ENCODE measurements at regions of chr6 and their contacts with region 1.

Region 1: GRCh38 chr6:8219352-8219943 is 117.1 kb upstream of the EEF1E1 start:
- DNase-seq: peak in 1 of 3 donors; percentile 81
- ATAC-seq: peak; percentile 65
- H3K4me3 ChIP-seq: no peak overlapping the region
- H3K4me1 ChIP-seq: no peaks in the 10 kb centered on the region
- CTCF ChIP-seq: no peak

Region 2: GRCh38 chr6:7881765-7882500 is 337.5 kb before region 1 on chr6:
- intact Hi-C with region 1: no loop called
- DNase-seq: no peak
- ATAC-seq: no peak
- H3K4me3 ChIP-seq: no peak overlapping the region
- H3K4me1 ChIP-seq: no peaks in the 10 kb centered on the region
- CTCF ChIP-seq: no peak

Region 3: DNA sequence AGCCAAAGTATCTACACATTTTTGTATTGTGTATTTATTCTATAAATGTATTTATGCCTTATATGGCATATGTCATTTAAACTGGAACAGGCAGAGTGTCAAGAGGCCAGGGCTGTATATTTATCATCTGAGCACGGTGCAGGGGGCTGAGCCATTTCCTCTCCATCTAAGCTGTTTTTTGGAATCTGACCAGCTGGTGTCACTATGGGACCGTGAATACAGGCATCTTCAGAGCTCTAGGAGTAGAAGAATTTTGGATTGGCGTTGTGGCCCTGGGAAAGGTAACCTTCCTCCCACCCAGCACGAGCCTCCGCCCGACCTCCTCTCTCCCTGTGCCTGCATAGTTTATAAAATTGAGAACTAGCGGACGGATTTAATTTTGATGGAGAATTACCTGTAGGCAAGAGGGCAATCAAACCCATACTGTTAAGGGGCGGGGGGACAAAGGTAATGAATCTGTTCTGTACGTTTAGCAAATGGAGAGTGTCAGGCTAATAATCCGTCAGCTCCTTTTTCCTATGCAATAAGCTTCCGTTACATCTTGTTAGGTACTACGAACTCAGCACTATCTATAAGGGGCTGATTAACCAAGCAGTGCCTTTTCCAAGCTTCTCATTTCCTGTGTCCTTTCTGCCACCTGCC is 88.1 kb before region 1 on chr6:
- intact Hi-C with region 1: loop called in 1 of 2 experiments (anchors 5 kb)
- DNase-seq: peak in 1 of 3 donors; percentile 79
- ATAC-seq: peak; percentile 73
- H3K4me3 ChIP-seq: no peak overlapping the region
- H3K4me1 ChIP-seq: no peaks in the 10 kb centered on the region
- CTCF ChIP-seq: no peak

Region 4: GRCh38 chr6:8269872-8270454 is 50.5 kb after region 1 on chr6:
- intact Hi-C with region 1: no loop called
- DNase-seq: no peak
- ATAC-seq: no peak
- H3K4me3 ChIP-seq: no peak overlapping the region
- H3K4me1 ChIP-seq: no peaks in the 10 kb centered on the region
- CTCF ChIP-seq: no peak

Measured in mucosa of descending colon (tissue), 3 donors.